ENCODE measurements at regions of chr6 and their contacts with region 1.

Region 1: DNA sequence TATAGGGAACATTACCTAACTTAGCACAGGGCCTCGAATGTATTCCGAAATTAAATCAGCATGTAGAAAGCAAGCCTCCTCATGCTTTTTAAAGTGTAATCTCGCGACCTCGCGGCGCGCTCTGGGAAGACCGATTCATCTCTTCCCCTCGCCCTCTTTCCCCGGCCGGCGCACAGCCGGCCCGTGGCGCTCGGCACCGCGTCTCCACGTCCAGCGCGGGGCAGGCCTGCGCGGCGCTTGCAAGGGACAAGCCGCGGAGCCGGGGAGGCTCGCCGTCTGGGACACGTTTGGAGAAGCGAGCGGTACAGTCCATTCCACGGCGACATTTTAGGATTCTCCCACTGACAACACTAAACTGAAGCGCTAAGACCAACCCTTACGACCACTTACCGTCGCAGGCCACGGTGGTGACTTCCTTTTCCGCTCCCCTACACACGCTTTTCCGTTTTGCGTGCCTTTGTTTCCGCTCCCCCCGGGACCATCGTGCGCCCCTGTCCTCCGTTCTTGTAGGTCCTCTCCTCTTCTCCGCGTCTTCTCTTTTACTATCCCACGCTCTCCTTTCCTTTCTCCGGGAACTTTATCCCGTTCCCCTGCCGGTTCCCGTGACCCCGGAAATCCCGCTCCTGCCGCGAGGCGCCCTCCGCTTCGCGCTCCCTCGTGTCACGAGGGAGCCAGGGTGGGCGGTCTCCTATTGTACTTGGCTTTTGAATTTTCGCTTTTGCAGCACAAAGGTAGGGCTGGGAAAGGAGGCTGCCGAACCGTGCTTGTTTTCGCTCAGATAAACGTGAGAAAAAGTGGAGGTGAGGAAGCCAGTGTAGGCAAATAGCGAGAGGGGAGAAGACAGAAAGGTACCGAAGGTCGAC is at the start of gene ECHDC1:
- DNase-seq: peak; percentile 63
- H3K4me3 Mint-ChIP-seq: no peak within 1 kb of the TSS
- H3K27ac Mint-ChIP-seq: no peak within 1 kb of the TSS
- H3K4me1 Mint-ChIP-seq: peaks cover 12% of the 10 kb centered on the region
- H3K27me3 Mint-ChIP-seq: no peaks in the 10 kb centered on the region
- total RNA-seq, gene ECHDC1: 57.4 and 61.8 TPM in 2 replicates

Region 2: DNA sequence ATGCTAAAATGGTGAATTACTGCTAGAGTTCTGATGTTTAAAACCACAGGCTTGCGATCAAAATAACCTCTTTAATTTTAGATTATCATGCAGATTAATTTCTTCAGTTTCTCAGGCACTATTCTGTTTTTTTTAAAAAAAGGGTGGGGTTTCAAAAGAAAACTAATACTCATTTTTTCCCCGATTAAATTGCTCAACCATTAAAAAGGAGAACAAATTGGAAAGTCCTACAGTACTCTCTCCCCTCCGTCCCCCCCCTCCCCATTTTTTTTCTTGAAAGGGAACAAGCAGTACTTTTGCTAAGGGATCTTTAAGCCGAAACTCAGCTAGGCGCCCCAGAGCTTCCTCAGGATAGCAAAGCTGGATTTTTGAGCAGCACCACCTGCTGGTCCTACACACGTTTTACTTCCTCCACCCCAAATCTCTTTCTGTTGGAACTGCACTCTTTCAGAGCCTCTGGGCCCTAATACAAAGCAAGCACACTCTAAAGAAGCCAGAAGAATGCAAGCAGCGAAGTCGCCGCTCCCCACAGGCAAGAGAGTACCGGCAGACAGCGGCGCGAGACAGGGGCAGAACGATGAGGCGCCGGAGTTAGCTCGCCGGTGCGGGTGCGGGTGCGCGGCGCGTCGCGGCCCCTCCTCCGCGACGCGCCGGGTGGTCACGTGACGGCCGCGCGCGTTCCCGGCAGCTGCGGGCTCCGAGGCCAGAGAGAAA is 76.8 kb before region 1 on chr6 and contains the start of gene RNF146:
- intact Hi-C with region 1: loop called (anchors 1 kb)
- DNase-seq: peak; percentile 63
- H3K4me3 Mint-ChIP-seq: peak within 1 kb of the TSS; percentile 100
- H3K27ac Mint-ChIP-seq: peak within 1 kb of the TSS; percentile 100
- H3K4me1 Mint-ChIP-seq: peaks cover 42% of the 10 kb centered on the region
- H3K27me3 Mint-ChIP-seq: peaks cover 9% of the 10 kb centered on the region
- total RNA-seq, gene RNF146: 18.3 and 20.5 TPM in 2 replicates

Region 3: GRCh38 chr6:127291495-127291894 is 51.7 kb before region 1 on chr6:
- intact Hi-C with region 1: loop called (anchors 1 kb)
- DNase-seq: no peak
- H3K4me3 Mint-ChIP-seq: peak overlapping the region; percentile 8
- H3K27ac Mint-ChIP-seq: peak overlapping the region; percentile 77
- H3K4me1 Mint-ChIP-seq: peaks cover 32% of the 10 kb centered on the region
- H3K27me3 Mint-ChIP-seq: no peaks in the 10 kb centered on the region

Region 4: GRCh38 chr6:127302728-127303660 is 40.2 kb before region 1 on chr6:
- intact Hi-C with region 1: loop called (anchors 2 kb)
- DNase-seq: no peak
- H3K4me3 Mint-ChIP-seq: no peak overlapping the region
- H3K27ac Mint-ChIP-seq: no peak overlapping the region
- H3K4me1 Mint-ChIP-seq: peaks cover 10% of the 10 kb centered on the region
- H3K27me3 Mint-ChIP-seq: no peaks in the 10 kb centered on the region

Region 5: DNA sequence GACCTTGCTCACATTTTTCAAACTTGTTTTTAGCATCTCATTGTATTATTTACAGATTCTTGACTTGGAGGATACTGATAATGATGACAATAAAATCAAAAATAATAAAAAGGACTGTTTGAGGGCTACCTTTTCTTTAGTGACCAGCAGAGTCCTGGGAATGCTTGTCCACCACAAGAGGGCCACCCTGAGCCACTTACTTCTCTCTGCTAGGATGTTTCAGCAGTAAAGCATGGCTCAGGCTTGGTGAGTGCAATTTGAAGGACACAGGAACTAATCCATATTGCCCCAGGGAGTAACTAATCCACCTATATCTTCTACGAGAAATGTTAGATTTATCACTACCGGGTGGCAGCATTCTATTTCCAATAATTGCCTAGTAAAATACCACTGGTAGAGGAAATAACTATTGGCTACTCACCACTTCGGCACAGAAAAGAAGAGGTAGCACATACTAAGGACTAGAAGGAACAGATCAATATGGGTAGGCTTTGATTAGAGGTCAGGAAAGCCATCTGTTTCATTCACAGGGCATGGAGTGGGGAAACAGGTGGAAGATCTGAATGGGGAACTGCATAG is 121.8 kb after region 1 on chr6:
- intact Hi-C with region 1: loop called (anchors 5 kb)
- DNase-seq: peak; percentile 36
- H3K4me3 Mint-ChIP-seq: no peak overlapping the region
- H3K27ac Mint-ChIP-seq: no peak overlapping the region
- H3K4me1 Mint-ChIP-seq: peaks cover 9% of the 10 kb centered on the region
- H3K27me3 Mint-ChIP-seq: peaks cover under 1% of the 10 kb centered on the region

Region 6: DNA sequence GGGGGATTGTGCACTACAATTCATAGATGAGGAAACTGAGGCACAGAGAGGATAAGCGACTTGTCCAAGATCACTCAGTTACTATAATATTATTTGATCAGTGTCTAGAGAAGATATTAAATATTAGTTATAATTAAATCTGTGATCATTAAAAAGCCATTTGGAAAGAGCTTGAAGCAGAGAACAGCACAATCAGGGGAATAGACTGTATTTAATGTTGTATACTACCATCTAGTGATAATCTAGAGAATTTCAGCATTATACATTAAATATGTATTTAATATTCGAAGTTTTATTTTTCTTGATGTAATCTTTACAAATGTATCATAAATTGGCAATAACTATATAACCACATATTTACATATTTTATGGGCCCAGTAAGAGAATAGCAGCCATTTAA is 196.1 kb after region 1 on chr6:
- intact Hi-C with region 1: loop called (anchors 5 kb)
- DNase-seq: no peak
- H3K4me3 Mint-ChIP-seq: no peak overlapping the region
- H3K27ac Mint-ChIP-seq: no peak overlapping the region
- H3K4me1 Mint-ChIP-seq: peaks cover 5% of the 10 kb centered on the region
- H3K27me3 Mint-ChIP-seq: peaks cover 17% of the 10 kb centered on the region

Region 7: DNA sequence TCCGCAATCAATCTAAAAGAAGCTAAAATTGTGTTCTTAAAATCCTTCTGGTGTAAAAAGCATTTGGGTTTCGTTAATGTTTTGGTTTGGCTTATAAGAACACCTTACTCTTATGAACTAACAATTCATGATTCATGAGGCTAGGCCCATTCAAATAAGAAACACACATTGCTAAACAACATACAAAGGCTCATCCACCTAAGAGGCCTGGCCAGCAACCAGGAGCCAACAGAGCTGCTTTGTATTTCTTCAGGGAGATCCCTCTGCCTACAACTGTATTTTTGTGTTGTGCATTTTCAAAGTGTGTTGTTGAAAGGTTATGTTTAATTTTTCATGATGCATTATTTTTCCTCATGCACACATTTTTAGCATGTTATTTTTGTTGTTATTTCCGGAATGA is 1078.6 kb after region 1 on chr6:
- intact Hi-C with region 1: no loop called
- DNase-seq: no peak
- H3K4me3 Mint-ChIP-seq: no peak overlapping the region
- H3K27ac Mint-ChIP-seq: no peak overlapping the region
- H3K4me1 Mint-ChIP-seq: no peaks in the 10 kb centered on the region
- H3K27me3 Mint-ChIP-seq: no peaks in the 10 kb centered on the region